ENCODE measurements at regions of chr4 and their contacts with region 1.

Region 1: DNA sequence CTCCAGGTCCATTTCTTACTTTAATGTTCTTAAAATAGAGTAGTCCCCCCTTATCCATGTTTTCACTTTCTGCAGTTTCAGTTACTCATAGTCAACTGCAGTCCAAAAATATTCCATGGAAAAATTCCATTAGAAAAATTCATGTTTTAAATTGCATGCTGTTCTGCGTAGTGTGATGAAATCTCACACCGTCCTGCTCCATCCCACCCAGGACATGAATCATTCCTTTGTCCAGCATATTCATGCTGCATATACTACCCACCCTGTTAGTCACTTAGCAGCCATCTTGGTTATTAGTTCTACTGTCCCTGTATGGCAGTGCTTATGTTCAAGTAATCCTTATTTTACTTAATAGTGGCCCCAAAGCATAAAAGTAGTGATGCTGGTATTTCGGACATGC is 5.4 kb upstream of the PDLIM5 start:
- DNase-seq: no peak
- ATAC-seq: peak in 1 of 4 donors; percentile 23
- H3K4me3 ChIP-seq: no peak overlapping the region
- H3K27ac ChIP-seq: no peak overlapping the region
- H3K4me1 ChIP-seq: peaks cover 0 to 21% (median 6%) of the 10 kb centered on the region in 12 donors
- H3K27me3 ChIP-seq: no peaks in the 10 kb centered on the region
- CTCF ChIP-seq: no peak
- POLR2A ChIP-seq: no peak

Region 2: GRCh38 chr4:94207469-94208224 is 238.7 kb before region 1 on chr4 and contains the start of gene SMARCAD1:
- intact Hi-C with region 1: no loop called
- DNase-seq: peak; percentile 90 to 95 (median 91)
- ATAC-seq: peak; percentile 93 to 97 (median 96)
- H3K4me3 ChIP-seq: peak within 1 kb of the TSS; percentile 27 to 88 (median 80)
- H3K27ac ChIP-seq: peak within 1 kb of the TSS; percentile 83 to 96 (median 89)
- H3K4me1 ChIP-seq: peaks cover 5 to 32% (median 19%) of the 10 kb centered on the region in 12 donors
- H3K27me3 ChIP-seq: no peaks in the 10 kb centered on the region
- CTCF ChIP-seq: no peak
- POLR2A ChIP-seq: no peak
- total RNA-seq, gene SMARCAD1: 7.3 to 14.0 (median 9.8) TPM

Region 3: DNA sequence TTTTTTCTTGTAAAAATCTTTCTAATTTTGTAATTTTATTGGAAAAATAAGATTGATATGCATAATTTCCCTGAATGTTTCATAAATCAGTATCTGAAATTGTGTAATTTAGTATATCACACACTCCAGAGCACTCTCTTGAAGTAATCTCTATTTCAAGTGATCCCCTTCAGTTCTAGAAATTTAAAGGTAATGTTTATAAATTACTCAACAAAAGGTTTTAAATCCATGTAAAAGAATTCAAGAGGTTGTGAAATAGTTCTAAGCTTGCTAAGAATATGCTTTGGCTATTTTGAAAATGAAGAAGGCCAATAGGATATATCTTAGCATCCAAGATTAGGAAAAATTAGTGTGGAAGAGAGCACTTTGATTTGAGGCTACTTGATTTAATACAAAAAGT is 210.6 kb before region 1 on chr4:
- intact Hi-C with region 1: no loop called
- DNase-seq: no peak
- ATAC-seq: no peak
- H3K4me3 ChIP-seq: no peak overlapping the region
- H3K27ac ChIP-seq: no peak overlapping the region
- H3K4me1 ChIP-seq: peaks cover 0 to 4% (median 0%) of the 10 kb centered on the region in 12 donors
- H3K27me3 ChIP-seq: no peaks in the 10 kb centered on the region
- CTCF ChIP-seq: no peak
- POLR2A ChIP-seq: no peak

Region 4: DNA sequence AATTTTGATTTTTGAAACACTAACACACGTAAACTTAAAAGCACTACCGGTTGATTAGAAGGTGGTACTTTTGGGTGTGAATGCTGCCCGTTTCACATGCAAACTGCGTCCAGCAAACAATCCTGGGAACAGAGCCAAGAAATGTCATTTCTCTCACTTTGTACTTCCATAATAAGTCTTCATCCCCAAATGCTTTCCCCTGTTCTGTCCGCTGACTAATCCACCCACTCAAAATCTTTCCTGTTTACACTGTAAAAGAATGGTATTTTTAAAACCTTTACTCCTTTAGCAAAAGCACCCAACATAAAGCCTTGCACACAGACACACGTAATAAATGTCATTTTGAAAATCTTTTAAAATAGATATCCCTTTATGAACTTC is 33.7 kb before region 1 on chr4:
- intact Hi-C with region 1: loop called in 5 of 10 experiments (anchors 1 to 5 kb)
- DNase-seq: peak in 1 of 5 donors; percentile 29
- ATAC-seq: peak in 1 of 4 donors; percentile 11
- H3K4me3 ChIP-seq: peak overlapping the region in 7 of 12 donors; percentile 0 to 24 (median 9)
- H3K27ac ChIP-seq: peak overlapping the region; percentile 20 to 94 (median 83)
- H3K4me1 ChIP-seq: peaks cover 4 to 61% (median 30%) of the 10 kb centered on the region in 12 donors
- H3K27me3 ChIP-seq: no peaks in the 10 kb centered on the region
- CTCF ChIP-seq: no peak
- POLR2A ChIP-seq: no peak